ENCODE measurements at regions of chr19 and their contacts with region 1.

Region 1: DNA sequence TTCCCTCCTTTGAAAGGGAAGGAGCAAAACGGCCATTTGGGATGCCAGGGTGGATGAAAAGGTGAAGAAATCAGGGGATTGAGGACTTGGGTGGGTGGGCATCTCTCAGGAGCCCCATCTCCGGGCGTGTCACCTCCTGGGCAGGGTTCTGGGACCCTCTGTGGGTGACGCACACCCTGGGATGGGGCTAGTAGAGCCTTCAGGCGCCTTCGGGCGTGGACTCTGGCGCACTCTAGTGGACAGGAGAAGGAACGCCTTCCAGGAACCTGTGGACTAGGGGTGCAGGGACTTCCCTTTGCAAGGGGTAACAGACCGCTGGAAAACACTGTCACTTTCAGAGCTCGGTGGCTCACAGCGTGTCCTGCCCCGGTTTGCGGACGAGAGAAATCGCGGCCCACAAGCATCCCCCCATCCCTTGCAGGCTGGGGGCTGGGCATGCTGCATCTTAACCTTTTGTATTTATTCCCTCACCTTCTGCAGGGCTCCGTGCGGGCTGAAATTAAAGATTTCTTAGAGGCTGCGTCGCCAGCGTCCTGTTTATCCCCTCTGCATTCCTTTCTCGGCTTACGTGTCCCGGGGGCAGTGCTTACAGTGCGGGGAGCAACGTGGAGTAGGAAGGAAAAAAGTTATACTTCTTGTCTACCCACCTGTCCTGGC is 15.2 kb upstream of the S1PR4 start:
- DNase-seq: peak; percentile 84
- ATAC-seq: peak; percentile 91
- H3K4me3 ChIP-seq: no peak overlapping the region
- H3K27ac ChIP-seq: no peak overlapping the region
- H3K4me1 ChIP-seq: peaks cover 6% of the 10 kb centered on the region
- H3K27me3 ChIP-seq: no peaks in the 10 kb centered on the region
- CTCF ChIP-seq: peak; percentile 95

Region 2: GRCh38 chr19:2962045-2962561 is 201.3 kb before region 1 on chr19:
- intact Hi-C with region 1: loop called (anchors 5 kb)
- DNase-seq: no peak
- ATAC-seq: peak; percentile 97
- H3K4me3 ChIP-seq: no peak overlapping the region
- H3K27ac ChIP-seq: no peak overlapping the region
- H3K4me1 ChIP-seq: peaks cover 3% of the 10 kb centered on the region
- H3K27me3 ChIP-seq: no peaks in the 10 kb centered on the region
- CTCF ChIP-seq: peak; percentile 81

Region 3: GRCh38 chr19:3125900-3126524 is 37.3 kb before region 1 on chr19:
- intact Hi-C with region 1: loop called (anchors 5 kb)
- DNase-seq: peak; percentile 79
- ATAC-seq: peak; percentile 93
- H3K4me3 ChIP-seq: no peak overlapping the region
- H3K27ac ChIP-seq: no peak overlapping the region
- H3K4me1 ChIP-seq: peaks cover 4% of the 10 kb centered on the region
- H3K27me3 ChIP-seq: no peaks in the 10 kb centered on the region
- CTCF ChIP-seq: peak; percentile 68

Region 4: GRCh38 chr19:3224346-3225168 is 61.2 kb after region 1 on chr19 and contains the start of gene CELF5:
- intact Hi-C with region 1: no loop called
- DNase-seq: peak; percentile 73
- ATAC-seq: peak; percentile 86
- H3K4me3 ChIP-seq: no peak within 1 kb of the TSS
- H3K27ac ChIP-seq: no peak within 1 kb of the TSS
- H3K4me1 ChIP-seq: no peaks in the 10 kb centered on the region
- H3K27me3 ChIP-seq: peaks cover 65% of the 10 kb centered on the region
- CTCF ChIP-seq: peak; percentile 35
- total RNA-seq, gene CELF5: not detected